T-cell (primary cell): ENCODE measurements at regions of chr14 and their contacts with region 1.

Region 1: DNA sequence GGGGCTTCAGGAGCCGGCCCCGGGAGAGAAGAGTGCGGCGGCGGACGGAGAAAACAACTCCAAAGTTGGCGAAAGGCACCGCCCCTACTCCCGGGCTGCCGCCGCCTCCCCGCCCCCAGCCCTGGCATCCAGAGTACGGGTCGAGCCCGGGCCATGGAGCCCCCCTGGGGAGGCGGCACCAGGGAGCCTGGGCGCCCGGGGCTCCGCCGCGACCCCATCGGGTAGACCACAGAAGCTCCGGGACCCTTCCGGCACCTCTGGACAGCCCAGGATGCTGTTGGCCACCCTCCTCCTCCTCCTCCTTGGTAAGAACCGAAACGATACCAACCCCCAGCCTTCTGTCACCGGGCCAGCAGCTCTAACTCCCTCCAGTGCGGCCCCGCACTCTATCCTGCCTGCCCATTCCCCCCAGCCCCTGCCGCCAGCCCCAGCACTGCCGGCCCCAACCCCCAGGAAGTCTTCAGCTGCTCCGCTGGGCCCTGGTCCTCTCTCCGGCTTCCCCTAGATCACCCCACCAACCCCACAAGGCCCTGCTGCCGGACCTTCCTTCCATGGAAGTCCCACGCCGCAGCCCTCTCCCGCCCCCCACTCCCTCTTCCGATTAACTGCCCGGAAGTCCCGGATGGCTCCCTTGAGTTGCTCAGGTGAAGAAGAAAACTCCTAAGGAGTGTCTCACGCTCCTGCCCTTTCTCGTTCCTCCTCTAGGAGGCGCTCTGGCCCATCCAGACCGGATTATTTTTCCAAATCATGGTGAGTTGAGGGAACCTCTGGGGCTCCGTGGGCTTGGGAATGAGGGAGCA is 693 bp downstream of the LRP10 start:
- DNase-seq: peak in 34 of 35 experiments; percentile 29 to 84 (median 57)
- ATAC-seq: peak; percentile 30 to 55 (median 44)
- H3K4me3 ChIP-seq: peak overlapping the region; percentile 78 to 80
- H3K4me3 Mint-ChIP-seq: peak overlapping the region; percentile 86 to 92 (median 91)
- H3K27ac ChIP-seq: peak overlapping the region; percentile 91
- H3K27ac Mint-ChIP-seq: peak overlapping the region; percentile 97 to 98
- H3K4me1 ChIP-seq: peaks cover 12 to 56% of the 10 kb centered on the region in 2 experiments
- H3K4me1 Mint-ChIP-seq: peaks cover 29 to 45% (median 45%) of the 10 kb centered on the region in 3 donors
- H3K27me3 ChIP-seq: no peaks in the 10 kb centered on the region
- H3K27me3 Mint-ChIP-seq: no peaks in the 10 kb centered on the region

Region 2: GRCh38 chr14:22900081-22900799 is 28.0 kb after region 1 on chr14:
- CTCF ChIA-PET with region 1: interaction called, 5 to 21 read pairs
- POLR2A ChIA-PET with region 1: interaction called in 1 of 2 experiments, 3 read pairs
- DNase-seq: peak in 26 of 35 experiments; percentile 17 to 85 (median 39)
- ATAC-seq: peak; percentile 73 to 81 (median 80)
- H3K4me3 ChIP-seq: no peak overlapping the region
- H3K4me3 Mint-ChIP-seq: no peak overlapping the region
- H3K27ac ChIP-seq: no peak overlapping the region
- H3K27ac Mint-ChIP-seq: peak overlapping the region in 1 of 2 donors; percentile 41
- H3K4me1 ChIP-seq: peaks cover 2 to 10% of the 10 kb centered on the region in 2 experiments
- H3K4me1 Mint-ChIP-seq: peaks cover 8 to 11% (median 9%) of the 10 kb centered on the region in 3 donors
- H3K27me3 ChIP-seq: no peaks in the 10 kb centered on the region
- H3K27me3 Mint-ChIP-seq: no peaks in the 10 kb centered on the region